Caco-2 (cell line): ENCODE measurements at regions of chr10 and their contacts with region 1.

Region 1: GRCh38 chr10:89351780-89352597 is 24.2 kb downstream of the IFIT3 start:
- DNase-seq: peak; percentile 92 to 96
- H3K4me3 ChIP-seq: no peak overlapping the region
- H3K4me3 Mint-ChIP-seq: peak overlapping the region; percentile 63
- H3K27ac Mint-ChIP-seq: peak overlapping the region; percentile 93
- H3K4me1 ChIP-seq: peaks cover 55% of the 10 kb centered on the region
- H3K4me1 Mint-ChIP-seq: peaks cover 37% of the 10 kb centered on the region
- H3K27me3 ChIP-seq: no peaks in the 10 kb centered on the region
- H3K27me3 Mint-ChIP-seq: no peaks in the 10 kb centered on the region
- CTCF ChIP-seq: no peak

Region 2: GRCh38 chr10:89296220-89296648 is 55.8 kb before region 1 on chr10:
- CTCF ChIA-PET with region 1: interaction called, 3 read pairs
- POLR2A ChIA-PET with region 1: no interaction called
- intact Hi-C with region 1: loop called (anchors 1 kb)
- DNase-seq: no peak
- H3K4me3 ChIP-seq: no peak overlapping the region
- H3K4me3 Mint-ChIP-seq: no peak overlapping the region
- H3K27ac Mint-ChIP-seq: no peak overlapping the region
- H3K4me1 ChIP-seq: peaks cover 9% of the 10 kb centered on the region
- H3K4me1 Mint-ChIP-seq: no peaks in the 10 kb centered on the region
- H3K27me3 ChIP-seq: no peaks in the 10 kb centered on the region
- H3K27me3 Mint-ChIP-seq: no peaks in the 10 kb centered on the region
- CTCF ChIP-seq: no peak

Region 3: DNA sequence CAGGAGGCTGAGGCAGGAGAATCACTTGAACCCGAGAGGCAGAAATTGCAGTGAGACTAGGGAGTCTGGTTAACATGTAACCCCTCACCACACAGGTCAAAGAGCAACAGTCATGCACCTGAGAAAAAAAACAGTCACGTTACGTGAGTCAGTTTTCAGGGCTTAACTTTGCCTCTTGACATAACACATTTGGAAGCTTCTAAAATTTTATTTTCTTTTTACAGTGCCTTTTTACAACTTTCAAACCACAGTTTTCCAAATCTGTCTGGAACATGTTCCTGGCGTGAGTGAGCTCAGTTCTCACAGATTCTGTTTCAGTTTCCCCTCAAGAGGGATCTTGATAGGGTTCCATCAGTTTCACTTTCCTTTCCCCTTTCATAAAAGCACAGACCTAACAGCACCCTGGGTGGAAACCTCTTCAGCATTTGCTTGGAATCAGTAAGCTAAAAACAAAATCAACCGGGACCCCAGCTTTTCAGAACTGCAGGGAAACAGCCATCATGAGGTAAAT is 19.8 kb before region 1 on chr10:
- CTCF ChIA-PET with region 1: no interaction called
- POLR2A ChIA-PET with region 1: interaction called, 3 read pairs
- intact Hi-C with region 1: loop called (anchors 1 kb)
- DNase-seq: peak in 1 of 2 experiments; percentile 10
- H3K4me3 ChIP-seq: peak overlapping the region; percentile 0; the same call in 1 of the 2 replicates
- H3K4me3 Mint-ChIP-seq: peak overlapping the region; percentile 41
- H3K27ac Mint-ChIP-seq: peak overlapping the region; percentile 65
- H3K4me1 ChIP-seq: peaks cover 32% of the 10 kb centered on the region
- H3K4me1 Mint-ChIP-seq: peaks cover 18% of the 10 kb centered on the region
- H3K27me3 ChIP-seq: no peaks in the 10 kb centered on the region
- H3K27me3 Mint-ChIP-seq: no peaks in the 10 kb centered on the region
- CTCF ChIP-seq: no peak

Region 4: DNA sequence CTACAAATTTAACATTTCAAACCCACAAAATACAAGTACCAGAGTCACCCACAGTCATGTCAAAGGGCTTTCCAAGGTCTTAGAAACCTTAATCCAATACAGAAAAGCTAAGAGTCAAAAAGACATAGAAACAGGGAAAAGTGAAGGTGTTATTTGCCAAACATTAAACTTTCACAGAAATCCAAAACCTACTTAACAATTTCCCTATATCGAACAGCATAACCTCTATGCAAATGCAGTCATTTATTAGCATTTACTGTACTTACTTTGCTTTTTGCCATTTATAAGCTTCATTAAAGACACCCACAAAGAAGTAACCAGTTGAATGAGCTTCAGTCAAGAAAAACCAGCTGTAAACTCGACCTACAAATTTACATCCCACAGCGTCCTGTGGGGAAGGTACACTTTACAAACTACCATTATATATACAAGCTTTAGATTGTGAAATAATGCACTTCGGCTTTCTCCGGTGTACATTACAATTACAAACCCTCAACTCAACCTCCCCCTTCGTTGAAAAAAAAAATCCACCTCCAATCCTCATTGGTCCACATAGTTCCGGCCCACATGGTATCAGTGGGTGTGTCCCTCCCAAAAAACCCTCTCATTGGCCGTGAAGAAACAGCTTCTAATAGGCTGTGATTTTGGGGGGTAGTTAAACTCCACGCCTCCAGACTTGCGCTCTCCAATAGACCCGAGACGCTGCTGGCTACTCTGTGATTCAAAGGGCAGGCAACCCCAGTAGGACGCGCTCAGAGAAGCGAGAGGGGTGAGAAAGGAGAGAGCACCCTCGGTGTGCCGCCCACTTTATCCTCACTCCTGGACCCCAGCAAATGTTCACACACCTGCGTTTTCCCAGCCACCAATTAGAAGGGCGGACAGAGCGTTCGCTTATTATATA is 291.7 kb after region 1 on chr10:
- CTCF ChIA-PET with region 1: no interaction called
- POLR2A ChIA-PET with region 1: interaction called, 8 read pairs
- intact Hi-C with region 1: loop called (anchors 2 kb)
- DNase-seq: peak; percentile 92 to 95
- H3K4me3 ChIP-seq: peak overlapping the region; percentile 83
- H3K4me3 Mint-ChIP-seq: no peak overlapping the region
- H3K27ac Mint-ChIP-seq: no peak overlapping the region
- H3K4me1 ChIP-seq: peaks cover 25% of the 10 kb centered on the region
- H3K4me1 Mint-ChIP-seq: peaks cover 16% of the 10 kb centered on the region
- H3K27me3 ChIP-seq: no peaks in the 10 kb centered on the region
- H3K27me3 Mint-ChIP-seq: no peaks in the 10 kb centered on the region
- CTCF ChIP-seq: no peak

Region 5: GRCh38 chr10:90930070-90930837 is 1578.3 kb after region 1 on chr10:
- CTCF ChIA-PET with region 1: no interaction called
- POLR2A ChIA-PET with region 1: no interaction called
- intact Hi-C with region 1: loop called (anchors 5 kb)
- DNase-seq: peak; percentile 80 to 89
- H3K4me3 ChIP-seq: no peak overlapping the region
- H3K4me3 Mint-ChIP-seq: peak overlapping the region; percentile 54
- H3K27ac Mint-ChIP-seq: peak overlapping the region; percentile 89
- H3K4me1 ChIP-seq: peaks cover 69% of the 10 kb centered on the region
- H3K4me1 Mint-ChIP-seq: peaks cover 53% of the 10 kb centered on the region
- H3K27me3 ChIP-seq: no peaks in the 10 kb centered on the region
- H3K27me3 Mint-ChIP-seq: no peaks in the 10 kb centered on the region
- CTCF ChIP-seq: no peak